ENCODE measurements at regions of chr3 and their contacts with region 1.

Region 1: DNA sequence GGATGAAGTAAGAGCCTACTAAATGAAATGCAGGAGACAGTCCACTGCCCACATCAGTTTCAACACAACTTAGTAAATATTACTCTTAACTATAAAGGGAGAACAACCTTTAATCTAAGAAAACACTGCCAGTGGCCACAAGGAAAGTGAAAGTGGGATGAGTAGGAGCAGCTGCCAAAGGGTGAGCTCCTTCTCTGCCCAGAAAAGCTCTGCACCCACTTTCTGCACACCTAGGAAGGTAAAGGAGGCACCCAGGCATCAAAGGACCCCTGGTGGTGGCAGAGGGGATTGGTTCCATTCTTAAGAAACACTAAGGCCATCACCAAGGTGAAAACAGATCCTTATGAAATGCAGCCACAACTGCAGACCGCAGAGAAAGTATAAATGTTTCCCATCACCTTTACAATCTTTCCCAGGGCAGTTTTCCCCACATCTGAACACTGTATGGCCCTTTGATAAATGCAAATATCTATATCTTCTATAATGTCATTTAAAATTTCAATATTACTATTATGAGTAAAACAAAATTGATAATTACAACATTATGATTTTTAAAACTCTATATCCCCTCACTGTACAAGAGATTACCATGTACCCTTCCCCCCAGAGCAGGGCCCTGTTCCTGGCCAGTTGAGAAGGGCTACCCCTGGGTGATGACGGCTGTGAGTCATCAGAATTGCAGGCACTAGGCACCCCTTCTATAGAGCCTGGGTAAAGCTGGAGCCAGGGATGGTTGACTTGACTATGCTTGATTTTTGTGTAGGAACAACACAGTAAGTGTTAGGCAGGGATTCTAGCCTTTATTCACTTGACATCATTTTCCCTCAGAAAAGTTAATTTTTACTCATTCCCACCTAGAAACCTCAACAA is 92.0 kb downstream of the SNRK start:
- DNase-seq: peak; percentile 52
- H3K4me3 Mint-ChIP-seq: no peak overlapping the region
- H3K27ac Mint-ChIP-seq: no peak overlapping the region
- H3K4me1 Mint-ChIP-seq: peaks cover 7% of the 10 kb centered on the region
- H3K27me3 Mint-ChIP-seq: peaks cover 14% of the 10 kb centered on the region

Region 2: GRCh38 chr3:43162230-43163084 is 215.8 kb before region 1 on chr3:
- intact Hi-C with region 1: loop called (anchors 1 kb)
- DNase-seq: peak; percentile 36
- H3K4me3 Mint-ChIP-seq: peak overlapping the region; percentile 21
- H3K27ac Mint-ChIP-seq: peak overlapping the region; percentile 73
- H3K4me1 Mint-ChIP-seq: peaks cover 15% of the 10 kb centered on the region
- H3K27me3 Mint-ChIP-seq: peaks cover 4% of the 10 kb centered on the region

Region 3: DNA sequence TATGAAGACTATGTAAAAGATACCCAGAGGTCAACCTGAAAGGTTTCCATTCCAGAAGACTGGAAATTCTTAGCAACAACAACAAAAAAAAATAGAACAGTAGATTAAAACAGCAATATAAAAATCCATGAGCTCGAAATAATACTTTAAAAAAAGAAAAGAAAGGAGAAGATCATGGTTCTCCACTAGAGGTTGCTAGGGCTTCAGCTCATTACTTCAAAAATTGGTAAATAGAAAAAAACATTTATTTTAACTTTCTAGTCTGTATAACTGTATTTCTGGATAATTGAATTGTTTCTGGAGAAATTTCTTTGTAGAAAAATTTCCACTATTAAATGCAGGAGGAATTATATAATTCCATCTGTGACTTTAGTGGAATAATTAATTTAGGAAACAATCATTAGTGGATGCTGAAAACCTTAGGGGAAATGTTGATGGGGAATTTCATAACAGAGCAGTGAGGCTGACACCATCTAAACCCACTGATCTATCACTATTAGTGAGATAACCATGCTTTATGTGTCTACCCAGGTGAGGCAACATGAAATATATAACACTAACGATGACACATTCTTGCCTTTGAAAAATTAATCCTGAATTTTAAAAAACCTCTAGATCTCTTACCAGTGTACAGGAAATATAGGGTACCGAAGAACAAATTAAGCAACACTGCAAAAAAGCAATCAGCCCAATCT is 154.5 kb before region 1 on chr3:
- intact Hi-C with region 1: loop called (anchors 1 kb)
- DNase-seq: no peak
- H3K4me3 Mint-ChIP-seq: no peak overlapping the region
- H3K27ac Mint-ChIP-seq: no peak overlapping the region
- H3K4me1 Mint-ChIP-seq: peaks cover 9% of the 10 kb centered on the region
- H3K27me3 Mint-ChIP-seq: peaks cover 7% of the 10 kb centered on the region

Measured in activated T-helper 2 cell treated with anti-CD3 and anti-CD28 coated beads, Interferon-gamma antibody, Interleukin-2, Interleukin-4, amounts not matched to agents 10 μg/mL and 5 μg/mL and 100 μg/mL, durations not matched to agents 14 hours and 24 hours and 36 hours (primary cell).